ENCODE measurements at regions of chr7 and their contacts with region 1.

Region 1: GRCh38 chr7:44986218-44987053 is 7.6 kb upstream of the MYO1G start:
- DNase-seq: peak; percentile 90 to 95
- H3K4me3 ChIP-seq: peak overlapping the region; percentile 52 to 57
- H3K27ac ChIP-seq: peak overlapping the region; percentile 91 to 96
- H3K4me1 ChIP-seq: no peaks in the 10 kb centered on the region
- H3K27me3 ChIP-seq: no peaks in the 10 kb centered on the region
- CTCF ChIP-seq: peak in 2 of 4 experiments; percentile 10 to 14
- POLR2A ChIP-seq: peak; percentile 93 to 97

Region 2: GRCh38 chr7:44573464-44574286 is 412.8 kb before region 1 on chr7 and contains the start of gene DDX56:
- intact Hi-C with region 1: loop called (anchors 10 kb)
- DNase-seq: peak; percentile 92 to 94
- H3K4me3 ChIP-seq: peak within 1 kb of the TSS; percentile 87 to 99
- H3K27ac ChIP-seq: peak within 1 kb of the TSS; percentile 81 to 91
- H3K4me1 ChIP-seq: peaks cover 0 to 6% of the 10 kb centered on the region in 2 donors
- H3K27me3 ChIP-seq: no peaks in the 10 kb centered on the region
- CTCF ChIP-seq: peak in 1 of 4 experiments; percentile 8
- POLR2A ChIP-seq: peak; percentile 77 to 86
- total RNA-seq, gene DDX56: 35.9 to 75.8 (median 45.2) TPM

Region 3: DNA sequence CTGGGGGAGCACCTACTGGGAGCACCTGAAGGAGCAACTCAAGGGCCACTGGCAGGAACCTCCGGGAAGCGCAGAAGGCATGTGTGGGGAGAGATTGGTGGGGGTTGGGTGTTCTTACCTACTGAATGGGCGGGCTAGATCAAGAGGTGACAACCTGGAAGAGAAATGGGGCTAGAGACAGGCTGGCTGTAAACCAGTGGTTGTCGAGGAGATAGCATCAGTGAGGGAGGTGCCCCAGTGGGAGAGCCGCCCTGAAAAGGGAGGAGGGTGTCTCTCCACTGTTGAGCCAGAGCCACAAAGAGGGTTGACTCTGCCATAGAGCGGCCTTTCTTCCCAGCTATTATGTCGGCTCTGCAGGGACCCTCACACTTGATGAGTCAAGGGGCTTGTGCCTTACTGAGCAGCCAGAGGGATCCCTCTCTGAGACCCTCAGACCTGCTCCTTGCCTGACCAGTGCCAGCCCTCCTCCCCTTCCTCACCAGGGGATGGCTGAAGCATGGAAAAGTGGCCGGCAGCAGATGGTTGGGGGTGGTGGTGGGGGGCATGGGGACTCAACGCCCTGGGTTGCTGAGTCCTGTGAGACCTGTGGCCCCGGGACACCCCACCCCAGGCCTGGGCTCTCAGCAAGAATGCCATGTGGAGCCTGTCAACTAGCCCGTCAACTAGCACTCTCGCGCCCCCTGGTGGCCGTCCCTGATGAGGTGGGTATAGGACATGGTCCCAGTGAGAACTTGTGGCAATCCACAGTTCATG is 64.7 kb before region 1 on chr7:
- intact Hi-C with region 1: no loop called
- DNase-seq: peak; percentile 70 to 80
- H3K4me3 ChIP-seq: no peak overlapping the region
- H3K27ac ChIP-seq: no peak overlapping the region
- H3K4me1 ChIP-seq: no peaks in the 10 kb centered on the region
- H3K27me3 ChIP-seq: no peaks in the 10 kb centered on the region
- CTCF ChIP-seq: peak; percentile 64 to 67 (median 67)
- POLR2A ChIP-seq: no peak